Activated CD4-positive, alpha-beta T cell treated with anti-CD3 and anti-CD28 coated beads for 36 hours (primary cell): ENCODE measurements at regions of chr3 and their contacts with region 1.

Region 1: GRCh38 chr3:43690400-43691119 is at the start of gene ABHD5:
- DNase-seq: peak; percentile 95
- ATAC-seq: peak; percentile 90
- H3K4me3 Mint-ChIP-seq: peak within 1 kb of the TSS; percentile 72
- H3K27ac Mint-ChIP-seq: peak within 1 kb of the TSS; percentile 75
- H3K4me1 Mint-ChIP-seq: peaks cover 36% of the 10 kb centered on the region
- H3K27me3 Mint-ChIP-seq: peaks cover 4% of the 10 kb centered on the region
- total RNA-seq, gene ABHD5: 8.6 to 9.8 TPM

Region 2: GRCh38 chr3:42772670-42773408 is 917.7 kb before region 1 on chr3 and contains the start of gene CCDC13:
- CTCF ChIA-PET with region 1: no interaction called
- POLR2A ChIA-PET with region 1: no interaction called
- intact Hi-C with region 1: loop called in 1 of 2 experiments (anchors 1 kb)
- DNase-seq: peak; percentile 96
- ATAC-seq: peak; percentile 96
- H3K4me3 Mint-ChIP-seq: peak within 1 kb of the TSS; percentile 83
- H3K27ac Mint-ChIP-seq: peak within 1 kb of the TSS; percentile 82
- H3K4me1 Mint-ChIP-seq: peaks cover 12% of the 10 kb centered on the region
- H3K27me3 Mint-ChIP-seq: no peaks in the 10 kb centered on the region
- total RNA-seq, gene CCDC13: 0.46 to 0.63 TPM

Region 3: DNA sequence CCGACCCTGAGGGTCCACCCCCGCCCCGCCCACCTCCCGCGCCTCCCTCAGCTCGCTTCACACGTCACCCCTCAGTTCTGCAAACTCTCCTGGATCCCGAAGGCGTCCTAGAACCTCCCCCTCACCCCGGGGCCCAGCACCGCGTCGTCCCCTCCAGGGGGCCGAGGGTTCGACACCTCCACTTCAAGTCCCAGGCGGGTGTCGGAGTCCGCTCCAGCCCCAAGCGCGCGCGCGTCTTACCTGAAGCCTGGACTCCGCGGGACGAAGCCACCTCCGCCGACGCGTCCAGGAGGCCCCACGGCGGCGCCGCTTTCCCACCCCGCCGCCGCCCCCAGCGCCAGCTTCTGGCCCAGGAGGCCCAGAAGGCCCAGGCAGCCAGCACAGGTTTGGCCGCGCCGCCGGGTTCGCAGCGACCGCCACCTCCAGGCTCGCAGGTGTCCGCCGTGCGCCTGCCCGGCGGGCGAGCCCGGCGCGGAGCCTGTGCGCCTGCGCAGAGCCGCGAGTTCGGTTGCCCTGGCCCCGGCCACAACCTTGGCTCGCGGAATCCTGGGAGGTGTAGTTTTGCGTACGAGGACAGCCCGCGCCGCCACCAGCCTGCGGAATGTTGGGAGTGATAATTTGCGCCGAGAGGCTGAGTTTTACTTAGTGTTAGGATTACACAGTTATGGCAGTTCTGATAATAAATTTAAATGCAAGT is 584.8 kb before region 1 on chr3 and contains the start of gene POMGNT2:
- CTCF ChIA-PET with region 1: no interaction called
- POLR2A ChIA-PET with region 1: no interaction called
- intact Hi-C with region 1: loop called in 1 of 2 experiments (anchors 2 kb)
- DNase-seq: peak; percentile 94
- ATAC-seq: peak; percentile 97
- H3K4me3 Mint-ChIP-seq: peak within 1 kb of the TSS; percentile 72
- H3K27ac Mint-ChIP-seq: peak within 1 kb of the TSS; percentile 58
- H3K4me1 Mint-ChIP-seq: peaks cover 16% of the 10 kb centered on the region
- H3K27me3 Mint-ChIP-seq: no peaks in the 10 kb centered on the region
- total RNA-seq, gene POMGNT2: 8.3 to 8.6 TPM

Region 4: GRCh38 chr3:43162230-43163084 is 528.1 kb before region 1 on chr3:
- CTCF ChIA-PET with region 1: no interaction called
- POLR2A ChIA-PET with region 1: no interaction called
- intact Hi-C with region 1: no loop called
- DNase-seq: peak; percentile 57
- ATAC-seq: peak; percentile 84
- H3K4me3 Mint-ChIP-seq: peak overlapping the region; percentile 61
- H3K27ac Mint-ChIP-seq: peak overlapping the region; percentile 87
- H3K4me1 Mint-ChIP-seq: peaks cover 20% of the 10 kb centered on the region
- H3K27me3 Mint-ChIP-seq: no peaks in the 10 kb centered on the region

Region 5: DNA sequence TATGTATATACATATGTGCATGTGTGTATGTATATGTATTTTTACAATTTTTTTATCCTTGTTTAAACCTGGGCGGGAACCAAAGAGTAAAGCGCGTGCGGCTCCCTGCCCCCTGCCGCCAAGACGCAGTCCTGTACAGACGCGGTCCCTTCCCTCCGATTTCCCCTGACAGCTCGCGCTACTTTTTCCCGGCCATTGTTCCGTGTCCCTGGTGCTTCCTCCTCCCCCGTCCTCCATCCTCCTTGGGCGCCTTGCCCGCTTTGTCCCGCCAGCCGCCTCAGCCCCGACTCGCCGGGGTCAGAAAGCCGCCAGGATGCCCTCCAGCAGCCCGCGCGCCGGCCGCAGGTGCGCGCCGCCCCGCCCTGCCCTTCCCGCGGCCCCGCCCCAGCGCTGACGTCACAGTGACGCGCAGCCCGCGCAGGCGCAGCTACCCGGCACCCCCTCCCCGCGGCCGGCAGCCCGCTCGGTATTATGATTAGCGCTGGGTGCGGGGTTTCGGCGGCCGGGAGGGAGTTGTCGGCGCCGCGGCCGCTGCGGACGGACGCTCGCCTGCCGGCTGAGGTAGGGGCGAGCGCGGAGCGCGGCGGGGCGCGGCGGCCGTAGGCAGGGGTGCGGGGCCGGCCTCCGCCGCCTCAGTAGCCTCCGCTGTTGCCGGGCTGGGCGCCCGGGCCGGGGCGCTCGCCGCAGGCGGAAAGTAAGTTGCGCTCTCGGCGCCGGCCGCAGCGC is 404.3 kb before region 1 on chr3 and contains the start of gene SNRK:
- CTCF ChIA-PET with region 1: no interaction called
- POLR2A ChIA-PET with region 1: no interaction called
- intact Hi-C with region 1: loop called in 1 of 2 experiments (anchors 1 kb)
- DNase-seq: peak; percentile 95
- ATAC-seq: peak; percentile 77
- H3K4me3 Mint-ChIP-seq: peak within 1 kb of the TSS; percentile 94
- H3K27ac Mint-ChIP-seq: peak within 1 kb of the TSS; percentile 96
- H3K4me1 Mint-ChIP-seq: peaks cover 39% of the 10 kb centered on the region
- H3K27me3 Mint-ChIP-seq: no peaks in the 10 kb centered on the region
- total RNA-seq, gene SNRK: 19.5 to 22.9 TPM

Region 6: DNA sequence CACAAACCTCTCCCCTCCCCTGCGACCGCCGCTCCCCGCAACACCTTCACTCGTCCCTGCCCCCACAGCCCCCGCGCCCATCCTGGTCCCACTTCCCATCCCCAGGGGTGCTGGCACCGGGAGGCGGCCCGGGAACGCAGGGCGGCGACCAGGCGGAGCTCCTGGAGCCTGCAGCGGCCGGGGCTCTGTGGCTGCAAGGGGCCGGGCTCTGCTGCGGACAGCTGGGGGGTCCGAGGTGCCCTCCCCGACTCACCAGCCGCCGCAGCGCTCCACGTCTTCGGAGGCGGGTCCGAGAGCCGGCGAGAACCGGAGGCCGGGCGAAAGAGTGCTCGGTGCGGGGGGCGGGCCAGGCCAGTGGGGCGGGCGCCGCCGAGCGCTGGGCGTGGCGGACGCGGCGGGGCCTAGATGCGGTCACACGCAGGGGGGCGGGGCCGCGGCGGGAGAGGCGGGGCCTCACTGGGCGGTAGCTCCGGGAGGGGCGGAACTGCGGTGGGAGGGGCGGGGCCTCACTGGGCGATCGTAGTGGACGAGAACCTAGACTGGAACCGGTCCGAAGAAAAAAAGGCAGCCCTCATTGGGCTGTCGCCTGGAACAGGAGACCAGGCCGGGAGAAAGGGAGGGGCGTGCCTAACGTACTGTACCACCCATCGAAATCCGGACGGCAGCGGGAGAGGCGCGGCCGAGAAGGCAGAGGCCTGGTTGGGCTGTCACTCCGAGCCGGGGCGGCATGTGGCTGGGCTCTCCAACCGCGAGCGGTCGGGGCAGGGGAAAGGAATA is 68.7 kb before region 1 on chr3 and contains the start of gene ANO10:
- CTCF ChIA-PET with region 1: interaction called, 5 read pairs
- POLR2A ChIA-PET with region 1: no interaction called
- intact Hi-C with region 1: loop called (anchors 1 to 2 kb)
- DNase-seq: peak; percentile 98
- ATAC-seq: peak; percentile 95
- H3K4me3 Mint-ChIP-seq: peak within 1 kb of the TSS; percentile 83
- H3K27ac Mint-ChIP-seq: peak within 1 kb of the TSS; percentile 87
- H3K4me1 Mint-ChIP-seq: peaks cover 12% of the 10 kb centered on the region
- H3K27me3 Mint-ChIP-seq: no peaks in the 10 kb centered on the region
- total RNA-seq, gene ANO10: 6.9 to 9.4 TPM

Region 7: GRCh38 chr3:43894176-43895049 is 203.9 kb after region 1 on chr3:
- CTCF ChIA-PET with region 1: no interaction called
- POLR2A ChIA-PET with region 1: no interaction called
- intact Hi-C with region 1: loop called in 1 of 2 experiments (anchors 1 kb)
- DNase-seq: peak; percentile 74
- ATAC-seq: peak; percentile 84
- H3K4me3 Mint-ChIP-seq: peak overlapping the region; percentile 63
- H3K27ac Mint-ChIP-seq: no peak overlapping the region
- H3K4me1 Mint-ChIP-seq: peaks cover 8% of the 10 kb centered on the region
- H3K27me3 Mint-ChIP-seq: peaks cover 42% of the 10 kb centered on the region

Region 8: GRCh38 chr3:44976002-44976815 is 1285.6 kb after region 1 on chr3 and contains the starts of genes EXOSC7 and ZDHHC3:
- CTCF ChIA-PET with region 1: no interaction called
- POLR2A ChIA-PET with region 1: no interaction called
- intact Hi-C with region 1: loop called in 1 of 2 experiments (anchors 2 kb)
- DNase-seq: peak; percentile 92
- ATAC-seq: peak; percentile 89
- H3K4me3 Mint-ChIP-seq: peak within 1 kb of the TSS; percentile 92
- H3K27ac Mint-ChIP-seq: peak within 1 kb of the TSS; percentile 96
- H3K4me1 Mint-ChIP-seq: peaks cover 54% of the 10 kb centered on the region
- H3K27me3 Mint-ChIP-seq: no peaks in the 10 kb centered on the region
- total RNA-seq, gene EXOSC7: 42.7 to 70.7 TPM
- total RNA-seq, gene ZDHHC3: 31.9 to 32.9 TPM